SK-N-SH (cell line): ENCODE measurements at regions of chr10 and their contacts with region 1.

Region 1: GRCh38 chr10:116787893-116788665 is 45.7 kb upstream of the HSPA12A start:
- DNase-seq: peak; percentile 88
- H3K4me3 ChIP-seq: peak overlapping the region; percentile 29 to 53; a peak in 2 of 4 replicates
- H3K27ac ChIP-seq: no peak overlapping the region
- H3K4me1 ChIP-seq: peaks cover 0 to 3% of the 10 kb centered on the region in 2 experiments; a peak in 1 of 4 replicates
- H3K27me3 ChIP-seq: no peaks in the 10 kb centered on the region
- CTCF ChIP-seq: peak; percentile 99
- EP300 ChIP-seq: no peak
- RAD21 ChIP-seq: peak; percentile 87

Region 2: GRCh38 chr10:116608686-116609594 is 179.1 kb before region 1 on chr10:
- CTCF ChIA-PET with region 1: interaction called, 11 read pairs
- POLR2A ChIA-PET with region 1: no interaction called
- DNase-seq: no peak
- H3K4me3 ChIP-seq: peak overlapping the region in 1 of 2 experiments; percentile 36; a peak in 3 of 4 replicates
- H3K27ac ChIP-seq: no peak overlapping the region
- H3K4me1 ChIP-seq: peaks cover 0 to 7% of the 10 kb centered on the region in 2 experiments; a peak in 1 of 4 replicates
- H3K27me3 ChIP-seq: no peaks in the 10 kb centered on the region
- CTCF ChIP-seq: no peak
- EP300 ChIP-seq: no peak
- RAD21 ChIP-seq: no peak

Region 3: DNA sequence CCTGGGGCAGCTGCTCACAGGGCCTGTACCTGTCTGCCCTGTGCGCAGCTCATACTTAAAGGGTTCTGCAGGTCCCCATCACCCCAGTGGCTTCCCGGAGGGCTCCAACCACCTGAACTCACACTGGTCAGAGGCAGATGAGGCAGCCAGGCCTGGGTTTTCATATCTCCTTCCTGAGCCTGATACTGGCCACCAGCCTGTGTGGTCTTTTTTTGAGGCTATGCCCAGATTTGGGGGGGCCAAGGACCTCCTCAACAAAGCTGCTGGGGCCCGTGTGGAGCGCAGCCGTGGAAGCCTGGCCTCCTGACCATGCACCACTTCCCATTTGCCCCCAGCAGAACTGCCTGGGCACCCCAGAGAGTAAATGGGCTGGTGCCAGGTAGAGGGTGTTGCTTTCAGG is 141.6 kb before region 1 on chr10:
- CTCF ChIA-PET with region 1: interaction called, 12 read pairs
- POLR2A ChIA-PET with region 1: no interaction called
- DNase-seq: no peak
- H3K4me3 ChIP-seq: no peak overlapping the region
- H3K27ac ChIP-seq: no peak overlapping the region
- H3K4me1 ChIP-seq: no peaks in the 10 kb centered on the region
- H3K27me3 ChIP-seq: no peaks in the 10 kb centered on the region; the same call in 1 of the 2 replicates
- CTCF ChIP-seq: no peak
- EP300 ChIP-seq: no peak
- RAD21 ChIP-seq: no peak

Region 4: DNA sequence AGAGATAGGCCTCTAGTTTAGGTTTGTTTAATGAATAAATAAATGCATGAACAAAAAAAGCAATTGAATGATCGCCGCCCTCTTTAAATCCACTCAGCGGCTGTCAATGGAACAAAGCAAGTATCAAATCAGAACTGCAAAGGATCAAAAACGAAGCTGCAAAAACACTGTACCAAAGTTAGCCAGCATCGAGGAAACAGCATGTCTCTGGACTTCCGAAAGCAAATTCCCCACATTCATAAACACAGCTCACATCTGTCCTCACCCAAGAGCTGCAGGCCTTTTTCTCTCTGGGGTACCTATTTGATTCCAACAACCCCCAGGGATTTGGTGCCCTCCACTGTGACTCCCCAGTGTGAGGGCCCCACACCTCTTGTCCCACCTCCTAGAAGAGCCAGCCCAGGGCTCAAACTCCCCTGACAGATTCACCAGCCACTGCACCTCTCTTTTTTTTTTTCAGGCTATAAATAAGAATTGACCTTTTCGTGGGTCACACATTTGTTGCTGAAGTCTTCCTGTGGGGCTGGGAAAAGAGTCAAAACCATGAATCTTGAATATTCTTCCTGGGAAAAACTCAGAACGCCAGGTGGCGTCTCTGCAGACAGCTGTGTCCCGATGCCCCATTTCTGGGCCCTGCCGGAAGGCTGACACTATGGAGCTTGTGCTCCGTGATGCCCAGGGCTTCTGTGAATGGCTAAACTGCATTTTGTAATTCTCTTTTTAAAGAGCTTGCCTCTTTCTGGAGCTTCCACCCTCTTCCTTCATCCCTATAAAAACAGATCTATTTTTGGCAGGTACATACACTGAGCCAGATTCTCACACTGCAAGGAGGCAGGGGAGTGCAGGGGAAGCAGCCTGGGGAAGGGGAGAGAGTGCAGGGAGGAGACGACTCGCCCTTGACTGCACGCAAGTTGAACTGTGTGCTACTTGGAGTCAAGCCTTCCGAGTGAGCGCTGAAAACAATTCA is 97.4 kb before region 1 on chr10:
- CTCF ChIA-PET with region 1: interaction called, 218 read pairs
- POLR2A ChIA-PET with region 1: no interaction called
- DNase-seq: no peak
- H3K4me3 ChIP-seq: no peak overlapping the region
- H3K27ac ChIP-seq: no peak overlapping the region
- H3K4me1 ChIP-seq: peaks cover 5 to 6% of the 10 kb centered on the region in 2 experiments; a peak in 1 of 4 replicates
- H3K27me3 ChIP-seq: no peaks in the 10 kb centered on the region
- CTCF ChIP-seq: no peak
- EP300 ChIP-seq: no peak
- RAD21 ChIP-seq: peak; percentile 19; the same call in 1 of the 2 replicates

Region 5: GRCh38 chr10:116716381-116716780 is 71.7 kb before region 1 on chr10:
- CTCF ChIA-PET with region 1: interaction called, 16 read pairs
- POLR2A ChIA-PET with region 1: no interaction called
- DNase-seq: no peak
- H3K4me3 ChIP-seq: no peak overlapping the region
- H3K27ac ChIP-seq: peak overlapping the region in 1 of 2 experiments; percentile 83; a peak in 2 of 4 replicates
- H3K4me1 ChIP-seq: peaks cover 0 to 73% of the 10 kb centered on the region in 2 experiments; a peak in 2 of 4 replicates
- H3K27me3 ChIP-seq: no peaks in the 10 kb centered on the region
- CTCF ChIP-seq: no peak
- EP300 ChIP-seq: no peak
- RAD21 ChIP-seq: no peak

Region 6: GRCh38 chr10:116742367-116743265 is 45.5 kb before region 1 on chr10 and contains the start of gene HSPA12A:
- CTCF ChIA-PET with region 1: interaction called, 17 read pairs
- POLR2A ChIA-PET with region 1: no interaction called
- DNase-seq: peak; percentile 95
- H3K4me3 ChIP-seq: peak within 1 kb of the TSS; percentile 70 to 74
- H3K27ac ChIP-seq: peak within 1 kb of the TSS; percentile 63 to 72
- H3K4me1 ChIP-seq: peaks cover 0 to 28% of the 10 kb centered on the region in 2 experiments; a peak in 1 of 4 replicates
- H3K27me3 ChIP-seq: no peaks in the 10 kb centered on the region
- CTCF ChIP-seq: no peak
- EP300 ChIP-seq: no peak
- RAD21 ChIP-seq: no peak
- polyA plus RNA-seq, gene HSPA12A: 2.9 and 3.3 TPM in 2 replicates

Region 7: GRCh38 chr10:116809483-116810119 is 21.5 kb after region 1 on chr10:
- CTCF ChIA-PET with region 1: interaction called, 14 read pairs
- POLR2A ChIA-PET with region 1: no interaction called
- DNase-seq: peak; percentile 70
- H3K4me3 ChIP-seq: no peak overlapping the region
- H3K27ac ChIP-seq: no peak overlapping the region
- H3K4me1 ChIP-seq: no peaks in the 10 kb centered on the region; a peak in 1 of 4 replicates
- H3K27me3 ChIP-seq: peaks cover 3% of the 10 kb centered on the region; the same call in 1 of the 2 replicates
- CTCF ChIP-seq: peak; percentile 54
- EP300 ChIP-seq: no peak
- RAD21 ChIP-seq: 0 out of 2 replicates have a peak, but pooled peaks have one; percentile 8